PC-3 (cell line): ENCODE measurements at regions of chr6 and their contacts with region 1.

Region 1: DNA sequence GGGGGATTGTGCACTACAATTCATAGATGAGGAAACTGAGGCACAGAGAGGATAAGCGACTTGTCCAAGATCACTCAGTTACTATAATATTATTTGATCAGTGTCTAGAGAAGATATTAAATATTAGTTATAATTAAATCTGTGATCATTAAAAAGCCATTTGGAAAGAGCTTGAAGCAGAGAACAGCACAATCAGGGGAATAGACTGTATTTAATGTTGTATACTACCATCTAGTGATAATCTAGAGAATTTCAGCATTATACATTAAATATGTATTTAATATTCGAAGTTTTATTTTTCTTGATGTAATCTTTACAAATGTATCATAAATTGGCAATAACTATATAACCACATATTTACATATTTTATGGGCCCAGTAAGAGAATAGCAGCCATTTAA is 20.1 kb upstream of the MTCL3 start:
- DNase-seq: peak; percentile 34
- ATAC-seq: peak; percentile 35
- H3K4me3 ChIP-seq: no peak overlapping the region
- H3K27ac ChIP-seq: no peak overlapping the region
- H3K4me1 ChIP-seq: no peaks in the 10 kb centered on the region
- H3K27me3 ChIP-seq: no peaks in the 10 kb centered on the region
- CTCF ChIP-seq: peak; percentile 52; the same call in 1 of the 2 replicates

Region 2: DNA sequence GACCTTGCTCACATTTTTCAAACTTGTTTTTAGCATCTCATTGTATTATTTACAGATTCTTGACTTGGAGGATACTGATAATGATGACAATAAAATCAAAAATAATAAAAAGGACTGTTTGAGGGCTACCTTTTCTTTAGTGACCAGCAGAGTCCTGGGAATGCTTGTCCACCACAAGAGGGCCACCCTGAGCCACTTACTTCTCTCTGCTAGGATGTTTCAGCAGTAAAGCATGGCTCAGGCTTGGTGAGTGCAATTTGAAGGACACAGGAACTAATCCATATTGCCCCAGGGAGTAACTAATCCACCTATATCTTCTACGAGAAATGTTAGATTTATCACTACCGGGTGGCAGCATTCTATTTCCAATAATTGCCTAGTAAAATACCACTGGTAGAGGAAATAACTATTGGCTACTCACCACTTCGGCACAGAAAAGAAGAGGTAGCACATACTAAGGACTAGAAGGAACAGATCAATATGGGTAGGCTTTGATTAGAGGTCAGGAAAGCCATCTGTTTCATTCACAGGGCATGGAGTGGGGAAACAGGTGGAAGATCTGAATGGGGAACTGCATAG is 74.3 kb before region 1 on chr6:
- CTCF ChIA-PET with region 1: interaction called, 3 read pairs
- POLR2A ChIA-PET with region 1: no interaction called
- intact Hi-C with region 1: loop called (anchors 1 kb)
- DNase-seq: peak; percentile 65
- ATAC-seq: peak; percentile 85
- H3K4me3 ChIP-seq: no peak overlapping the region
- H3K27ac ChIP-seq: no peak overlapping the region
- H3K4me1 ChIP-seq: no peaks in the 10 kb centered on the region
- H3K27me3 ChIP-seq: no peaks in the 10 kb centered on the region
- CTCF ChIP-seq: peak; percentile 83

Region 3: GRCh38 chr6:127706216-127706615 is 166.9 kb after region 1 on chr6:
- CTCF ChIA-PET with region 1: no interaction called
- POLR2A ChIA-PET with region 1: no interaction called
- intact Hi-C with region 1: no loop called
- DNase-seq: no peak
- ATAC-seq: no peak
- H3K4me3 ChIP-seq: no peak overlapping the region
- H3K27ac ChIP-seq: no peak overlapping the region
- H3K4me1 ChIP-seq: no peaks in the 10 kb centered on the region
- H3K27me3 ChIP-seq: peaks cover 13% of the 10 kb centered on the region; the same call in 1 of the 2 replicates
- CTCF ChIP-seq: no peak